PC-3 (cell line): ENCODE measurements at regions of chr2 and their contacts with region 1.

Region 1: GRCh38 chr2:45169339-45170190 is 160.3 kb upstream of the SIX2 start:
- DNase-seq: peak; percentile 39
- ATAC-seq: peak; percentile 24
- H3K4me3 ChIP-seq: peak overlapping the region; percentile 73
- H3K27ac ChIP-seq: peak overlapping the region; percentile 93
- H3K4me1 ChIP-seq: peaks cover 74% of the 10 kb centered on the region
- H3K27me3 ChIP-seq: no peaks in the 10 kb centered on the region
- CTCF ChIP-seq: no peak

Region 2: DNA sequence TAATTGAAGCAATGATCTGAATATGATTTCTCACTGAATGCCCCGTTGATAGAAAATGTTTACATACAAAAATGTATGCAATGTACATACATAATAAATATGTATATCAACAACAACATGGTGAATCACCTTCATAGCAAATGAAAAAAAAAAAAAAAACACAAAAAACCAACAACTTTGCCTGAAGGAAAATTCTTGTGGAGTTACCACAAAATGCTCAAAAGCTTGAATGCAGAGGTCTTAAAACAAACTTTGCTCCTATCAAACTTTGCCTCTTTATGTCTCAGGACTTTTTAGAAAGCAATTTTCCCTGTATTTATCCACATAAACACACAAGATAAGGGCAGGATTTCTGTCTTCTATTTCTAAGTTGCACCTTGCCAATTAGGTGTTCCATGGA is 67.4 kb before region 1 on chr2:
- CTCF ChIA-PET with region 1: no interaction called
- POLR2A ChIA-PET with region 1: no interaction called
- intact Hi-C with region 1: loop called (anchors 5 kb)
- DNase-seq: peak; percentile 59
- ATAC-seq: no peak
- H3K4me3 ChIP-seq: peak overlapping the region; percentile 7; the same call in 1 of the 2 replicates
- H3K27ac ChIP-seq: peak overlapping the region; percentile 43
- H3K4me1 ChIP-seq: peaks cover 38% of the 10 kb centered on the region
- H3K27me3 ChIP-seq: no peaks in the 10 kb centered on the region
- CTCF ChIP-seq: no peak

Region 3: DNA sequence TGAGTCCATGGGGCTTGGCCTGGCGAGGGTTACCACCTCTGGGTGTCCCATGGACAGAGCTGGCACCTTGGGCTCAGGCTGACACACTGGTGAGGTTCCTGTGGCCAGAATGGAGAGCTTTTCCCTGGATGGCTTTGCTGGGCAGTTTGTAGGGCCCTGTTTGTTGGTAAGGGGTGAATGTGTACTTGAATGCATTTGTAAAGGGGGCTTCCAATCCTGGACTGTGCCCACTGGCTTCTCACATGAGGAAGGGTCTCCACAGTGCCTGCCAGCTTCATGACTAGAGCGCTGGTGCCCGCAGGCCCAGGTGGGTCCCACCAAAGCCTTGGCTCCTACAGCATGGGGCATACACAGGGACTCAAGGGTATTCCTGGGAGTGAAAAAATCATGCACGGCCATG is 56.8 kb before region 1 on chr2:
- CTCF ChIA-PET with region 1: no interaction called
- POLR2A ChIA-PET with region 1: no interaction called
- intact Hi-C with region 1: no loop called
- DNase-seq: no peak
- ATAC-seq: no peak
- H3K4me3 ChIP-seq: no peak overlapping the region
- H3K27ac ChIP-seq: no peak overlapping the region
- H3K4me1 ChIP-seq: no peaks in the 10 kb centered on the region
- H3K27me3 ChIP-seq: no peaks in the 10 kb centered on the region
- CTCF ChIP-seq: no peak

Region 4: GRCh38 chr2:45275242-45275805 is 105.8 kb after region 1 on chr2:
- CTCF ChIA-PET with region 1: no interaction called
- POLR2A ChIA-PET with region 1: interaction called, 6 read pairs
- intact Hi-C with region 1: loop called (anchors 5 kb)
- DNase-seq: peak; percentile 94
- ATAC-seq: peak; percentile 57
- H3K4me3 ChIP-seq: no peak overlapping the region
- H3K27ac ChIP-seq: peak overlapping the region; percentile 93
- H3K4me1 ChIP-seq: peaks cover 80% of the 10 kb centered on the region
- H3K27me3 ChIP-seq: no peaks in the 10 kb centered on the region
- CTCF ChIP-seq: no peak

Region 5: GRCh38 chr2:45380131-45380836 is 210.7 kb after region 1 on chr2:
- CTCF ChIA-PET with region 1: no interaction called
- POLR2A ChIA-PET with region 1: no interaction called
- intact Hi-C with region 1: loop called (anchors 5 kb)
- DNase-seq: peak; percentile 98
- ATAC-seq: peak; percentile 98
- H3K4me3 ChIP-seq: no peak overlapping the region
- H3K27ac ChIP-seq: peak overlapping the region; percentile 98
- H3K4me1 ChIP-seq: peaks cover 40% of the 10 kb centered on the region
- H3K27me3 ChIP-seq: no peaks in the 10 kb centered on the region
- CTCF ChIP-seq: no peak

Region 6: DNA sequence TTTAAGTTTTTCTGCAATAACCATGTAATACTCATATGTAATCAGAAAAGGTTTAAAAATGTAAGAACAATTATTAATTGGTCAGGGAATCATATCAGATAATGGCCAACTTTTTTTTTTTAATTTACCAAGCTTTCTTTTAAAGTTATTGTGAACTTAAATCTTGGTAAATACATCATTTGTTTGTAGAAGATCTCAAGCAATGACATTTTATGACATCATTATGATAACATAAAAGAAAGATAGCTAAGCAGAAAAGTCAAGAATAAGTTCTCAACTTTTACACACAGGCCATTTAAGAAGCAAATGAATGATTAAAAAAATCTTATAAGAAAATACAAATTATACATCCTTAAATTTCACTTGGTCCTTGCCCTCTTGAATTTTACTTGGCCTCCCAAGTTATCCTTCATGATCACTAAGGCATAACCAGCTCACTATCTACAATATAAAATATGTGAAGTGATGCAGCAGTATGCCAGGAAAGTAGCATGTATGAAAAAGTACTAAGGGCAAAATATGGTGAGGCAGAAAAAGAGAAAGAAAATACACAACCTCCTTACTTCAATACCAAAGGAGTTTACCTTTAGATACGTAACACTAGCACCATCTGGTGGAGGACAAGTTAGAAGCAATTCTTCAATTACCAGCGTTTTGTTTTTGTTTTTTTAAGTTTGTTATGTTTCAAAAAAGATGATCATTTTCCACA is 324.9 kb after region 1 on chr2:
- CTCF ChIA-PET with region 1: no interaction called
- POLR2A ChIA-PET with region 1: no interaction called
- intact Hi-C with region 1: loop called (anchors 2 kb)
- DNase-seq: peak; percentile 83
- ATAC-seq: peak; percentile 40; the same call in 1 of the 2 replicates
- H3K4me3 ChIP-seq: no peak overlapping the region
- H3K27ac ChIP-seq: peak overlapping the region; percentile 38
- H3K4me1 ChIP-seq: peaks cover 5% of the 10 kb centered on the region
- H3K27me3 ChIP-seq: no peaks in the 10 kb centered on the region
- CTCF ChIP-seq: peak; percentile 89